ENCODE measurements at regions of chr1 and their contacts with region 1.

Region 1: DNA sequence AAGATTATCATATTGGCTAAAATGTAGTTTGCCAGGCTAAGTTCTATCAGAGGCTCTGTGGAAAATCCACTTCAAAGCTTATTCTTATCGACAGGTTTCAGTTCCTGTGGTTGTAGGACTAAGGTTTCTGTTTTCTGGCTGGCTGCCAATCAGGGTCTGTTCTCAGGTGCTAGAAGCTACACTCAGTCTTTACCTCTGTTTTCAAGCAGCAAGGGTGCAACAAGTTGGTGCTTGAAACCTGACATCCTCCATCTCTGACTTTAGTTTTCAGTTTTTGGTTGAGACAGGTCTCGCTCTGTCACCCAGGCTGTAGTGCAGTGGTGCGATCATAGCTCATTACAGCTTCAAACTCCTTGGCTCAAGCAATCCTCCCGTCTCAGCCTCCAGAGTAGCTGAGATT is 15.3 kb upstream of the TMCO2 start:
- DNase-seq: peak; percentile 80
- H3K4me3 Mint-ChIP-seq: no peak overlapping the region
- H3K27ac Mint-ChIP-seq: peak overlapping the region; percentile 58
- H3K4me1 Mint-ChIP-seq: peaks cover 44% of the 10 kb centered on the region
- H3K27me3 Mint-ChIP-seq: no peaks in the 10 kb centered on the region

Region 2: DNA sequence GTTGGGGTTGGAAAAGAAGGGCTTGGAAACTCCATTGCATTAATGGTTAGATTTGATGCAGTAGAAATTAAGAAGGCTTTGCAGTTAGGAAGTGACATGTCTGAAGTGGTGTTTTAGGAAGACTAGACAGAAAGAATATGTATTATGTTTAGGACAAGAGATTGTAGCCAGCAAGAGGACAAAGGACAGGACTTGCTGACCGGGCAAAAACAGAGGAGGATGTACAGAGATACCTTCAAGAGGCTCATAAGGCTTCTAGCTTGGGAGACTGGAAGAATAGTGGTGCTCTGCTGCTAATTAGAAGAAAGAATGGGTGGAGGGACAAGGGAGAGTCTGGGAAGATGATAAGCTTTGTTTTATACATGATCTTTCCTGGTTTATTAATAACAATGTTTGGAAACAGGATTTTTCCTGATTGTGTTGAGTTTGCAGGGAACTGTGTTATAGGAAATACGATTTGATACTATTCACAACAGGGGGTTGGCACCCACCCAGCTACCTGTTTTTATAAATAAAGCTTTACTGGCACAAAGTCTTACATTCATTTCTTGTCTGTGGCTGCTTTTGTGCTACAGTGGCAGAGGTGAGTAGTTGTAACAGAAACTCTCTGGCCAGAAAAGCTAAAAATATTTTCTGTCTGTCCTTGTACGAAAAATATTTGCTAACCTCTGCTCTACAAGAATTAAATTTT is 21.8 kb before region 1 on chr1:
- intact Hi-C with region 1: no loop called
- DNase-seq: no peak
- H3K4me3 Mint-ChIP-seq: no peak overlapping the region
- H3K27ac Mint-ChIP-seq: no peak overlapping the region
- H3K4me1 Mint-ChIP-seq: peaks cover 23% of the 10 kb centered on the region
- H3K27me3 Mint-ChIP-seq: no peaks in the 10 kb centered on the region

Region 3: GRCh38 chr1:40221977-40222772 is 10.3 kb before region 1 on chr1:
- intact Hi-C with region 1: loop called (anchors 2 kb)
- DNase-seq: no peak
- H3K4me3 Mint-ChIP-seq: no peak overlapping the region
- H3K27ac Mint-ChIP-seq: no peak overlapping the region
- H3K4me1 Mint-ChIP-seq: peaks cover 27% of the 10 kb centered on the region
- H3K27me3 Mint-ChIP-seq: no peaks in the 10 kb centered on the region

Measured in activated T-helper 2 cell treated with anti-CD3 and anti-CD28 coated beads, Interferon-gamma antibody, Interleukin-2, Interleukin-4, amounts not matched to agents 10 μg/mL and 5 μg/mL and 100 μg/mL, durations not matched to agents 14 hours and 24 hours and 36 hours (primary cell).